ENCODE measurements at regions of chr17 and their contacts with region 1.

Region 1: DNA sequence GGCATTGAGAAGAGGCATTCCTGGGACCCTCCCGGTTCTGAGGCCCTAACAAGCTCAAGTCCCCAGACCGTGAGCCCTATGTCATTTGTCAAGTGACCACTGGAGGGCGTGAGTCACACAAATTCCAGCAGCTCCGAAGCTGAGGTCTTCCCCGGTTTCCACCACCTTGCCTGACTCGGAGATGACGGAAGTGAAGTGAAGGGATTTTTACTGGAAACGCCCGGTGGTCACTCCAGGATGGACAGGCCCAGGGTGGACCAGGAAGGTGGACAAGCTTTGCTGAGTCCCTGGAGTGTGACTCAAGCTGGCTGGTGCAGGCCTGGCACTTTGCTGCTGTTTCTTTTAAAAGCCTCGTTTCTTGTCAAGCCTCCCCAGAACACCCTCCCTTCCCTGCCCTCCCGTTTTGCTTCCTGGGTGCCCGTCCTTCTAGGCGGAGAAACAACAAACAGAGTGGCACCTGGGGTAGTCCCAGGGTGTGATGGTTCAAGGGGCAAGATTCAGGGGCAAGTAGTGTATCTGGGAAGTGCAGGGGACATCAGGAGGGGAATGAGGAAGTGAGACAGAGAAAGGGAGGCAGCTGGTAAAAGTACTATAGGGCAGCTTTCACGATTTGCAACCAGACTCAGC is 5.3 kb upstream of the NOS2 start:
- ATAC-seq: peak; percentile 88 to 100 (median 98)
- H3K4me3 ChIP-seq: peak overlapping the region in 2 of 5 donors; percentile 16 to 17
- H3K27ac ChIP-seq: no peak overlapping the region
- H3K4me1 ChIP-seq: peaks cover 0 to 5% of the 10 kb centered on the region in 2 donors

Region 2: DNA sequence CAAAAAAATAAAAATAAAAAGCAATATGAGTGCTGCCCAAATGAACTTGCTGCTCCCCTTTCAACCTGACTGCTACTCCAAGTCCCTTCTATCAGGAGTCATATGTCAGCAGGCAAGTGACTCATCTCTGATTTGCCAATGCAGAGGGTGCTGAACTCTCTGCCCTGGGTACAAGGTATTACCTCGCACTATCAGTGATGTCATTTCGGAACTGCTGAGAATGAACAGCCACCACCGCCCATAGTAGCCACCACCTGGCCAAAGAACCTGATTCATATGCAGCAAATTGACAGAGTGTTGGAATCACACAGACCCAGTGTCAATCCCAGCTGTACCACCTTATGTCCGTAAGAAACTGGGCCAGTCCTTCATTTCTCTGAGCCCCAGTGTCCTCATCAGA is 56.4 kb after region 1 on chr17:
- in situ Hi-C with region 1: loop called in 1 of 9 experiments (anchors 10 kb)
- ATAC-seq: peak in 6 of 8 experiments; percentile 14 to 68 (median 57)
- H3K4me3 ChIP-seq: no peak overlapping the region
- H3K27ac ChIP-seq: no peak overlapping the region
- H3K4me1 ChIP-seq: peaks cover 0 to 3% of the 10 kb centered on the region in 2 donors

Region 3: GRCh38 chr17:27879987-27880608 is 74.5 kb after region 1 on chr17:
- in situ Hi-C with region 1: loop called in 1 of 9 experiments (anchors 10 kb)
- ATAC-seq: peak; percentile 91 to 100 (median 99)
- H3K4me3 ChIP-seq: no peak overlapping the region
- H3K27ac ChIP-seq: no peak overlapping the region
- H3K4me1 ChIP-seq: peaks cover 3 to 9% of the 10 kb centered on the region in 2 donors

Region 4: GRCh38 chr17:28008542-28008941 is 202.9 kb after region 1 on chr17:
- in situ Hi-C with region 1: loop called in 1 of 9 experiments (anchors 25 kb)
- ATAC-seq: peak in 3 of 8 experiments; percentile 94 to 95 (median 94)
- H3K4me3 ChIP-seq: no peak overlapping the region
- H3K27ac ChIP-seq: no peak overlapping the region
- H3K4me1 ChIP-seq: no peaks in the 10 kb centered on the region